Cardiac septum (tissue), 1 donor: ENCODE measurements at regions of chr2 and their contacts with region 1.

Region 1: GRCh38 chr2:96265840-96266679 is at the starts of genes CIAO1 and TMEM127:
- DNase-seq: peak; percentile 100
- total RNA-seq, gene CIAO1: 56.1 TPM
- total RNA-seq, gene TMEM127: 92.7 TPM

Region 2: GRCh38 chr2:96024336-96025193 is 241.5 kb before region 1 on chr2:
- intact Hi-C with region 1: loop called (anchors 10 kb)
- DNase-seq: peak; percentile 64

Region 3: DNA sequence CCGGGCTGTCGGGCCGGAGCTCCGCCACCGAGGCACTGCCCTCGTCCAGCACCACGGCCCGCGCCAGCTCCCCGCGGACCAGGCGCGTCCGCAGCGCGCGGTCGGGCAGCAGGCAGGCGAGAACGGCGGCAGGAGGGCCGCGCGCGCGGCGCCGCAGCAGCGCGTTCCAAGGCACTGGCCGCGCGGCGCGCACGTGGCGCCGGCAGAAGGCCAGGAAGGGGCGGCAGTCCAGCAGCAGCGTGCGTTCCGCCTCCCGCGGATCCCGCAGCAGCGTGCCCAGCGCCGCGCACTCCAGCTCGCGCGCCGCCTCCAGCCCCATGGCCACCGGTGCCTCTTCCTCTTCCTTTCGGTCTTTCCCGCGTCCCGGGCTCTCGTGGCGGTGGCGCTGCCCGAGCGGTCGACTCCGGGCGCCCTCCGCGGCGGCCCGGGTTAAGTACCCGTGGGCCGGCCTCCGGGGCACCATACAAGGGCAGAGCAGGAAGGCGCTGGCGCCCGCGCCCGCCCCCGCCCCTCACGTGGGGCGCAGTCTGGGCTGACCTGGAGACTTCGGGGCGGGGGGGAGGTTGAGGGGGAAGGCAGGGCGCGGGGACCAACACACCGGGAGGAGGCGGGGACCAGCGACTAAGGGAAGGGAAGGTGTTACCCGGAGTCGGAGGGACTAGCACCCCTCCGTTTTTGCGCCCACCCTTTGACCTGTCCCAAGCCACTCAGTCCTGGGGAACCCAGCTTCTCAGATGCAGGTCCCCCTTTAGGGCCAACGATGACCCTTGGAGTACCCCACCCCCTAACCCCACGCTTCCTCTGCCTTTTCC is 120.8 kb before region 1 on chr2 and contains the start of gene DUSP2:
- intact Hi-C with region 1: loop called (anchors 5 kb)
- DNase-seq: peak; percentile 88
- total RNA-seq, gene DUSP2: 1.3 TPM

Region 4: GRCh38 chr2:96208143-96209010 is 57.7 kb before region 1 on chr2 and contains the start of gene STARD7:
- intact Hi-C with region 1: loop called (anchors 1 kb)
- DNase-seq: peak; percentile 99
- total RNA-seq, gene STARD7: 142 TPM